Posterior cingulate gyrus (tissue), 11 donors: ENCODE measurements at regions of chr1 and their contacts with region 1.

Region 1: GRCh38 chr1:176559878-176560277 is 96.9 kb downstream of the PAPPA2 start:
- DNase-seq: peak in 4 of 10 donors; percentile 25 to 54 (median 26)

Region 2: DNA sequence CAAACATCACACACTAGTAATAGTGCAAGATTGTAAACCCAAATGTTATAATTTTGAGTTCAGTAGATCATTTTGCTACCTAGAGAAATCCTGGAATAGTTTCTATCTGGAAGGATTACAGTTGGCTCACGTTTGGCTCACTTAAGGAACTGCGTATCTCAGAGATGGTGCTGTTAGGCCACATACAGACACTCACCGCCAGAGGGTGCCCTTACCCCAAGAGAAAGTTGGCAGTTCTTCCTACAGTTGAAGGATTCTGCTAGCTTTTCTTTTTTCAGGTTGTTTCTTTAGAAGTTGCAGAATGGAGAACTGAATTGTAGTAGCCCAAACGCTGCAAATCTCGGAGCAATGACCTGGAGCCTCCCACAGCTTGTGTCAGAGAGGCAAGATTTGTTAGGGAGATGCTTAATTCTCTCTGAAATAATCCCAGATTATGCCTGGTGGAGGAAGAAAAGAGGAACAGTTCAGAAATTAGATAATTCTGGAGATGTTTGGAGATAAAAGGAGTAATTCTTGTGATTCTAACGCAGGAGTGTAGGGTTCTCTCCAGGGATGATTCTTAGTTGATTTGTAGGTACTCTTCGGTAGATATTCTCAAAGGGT is 184.8 kb before region 1 on chr1:
- intact Hi-C with region 1: loop called (anchors 1 kb)
- DNase-seq: peak; percentile 52 to 95 (median 81)

Region 3: DNA sequence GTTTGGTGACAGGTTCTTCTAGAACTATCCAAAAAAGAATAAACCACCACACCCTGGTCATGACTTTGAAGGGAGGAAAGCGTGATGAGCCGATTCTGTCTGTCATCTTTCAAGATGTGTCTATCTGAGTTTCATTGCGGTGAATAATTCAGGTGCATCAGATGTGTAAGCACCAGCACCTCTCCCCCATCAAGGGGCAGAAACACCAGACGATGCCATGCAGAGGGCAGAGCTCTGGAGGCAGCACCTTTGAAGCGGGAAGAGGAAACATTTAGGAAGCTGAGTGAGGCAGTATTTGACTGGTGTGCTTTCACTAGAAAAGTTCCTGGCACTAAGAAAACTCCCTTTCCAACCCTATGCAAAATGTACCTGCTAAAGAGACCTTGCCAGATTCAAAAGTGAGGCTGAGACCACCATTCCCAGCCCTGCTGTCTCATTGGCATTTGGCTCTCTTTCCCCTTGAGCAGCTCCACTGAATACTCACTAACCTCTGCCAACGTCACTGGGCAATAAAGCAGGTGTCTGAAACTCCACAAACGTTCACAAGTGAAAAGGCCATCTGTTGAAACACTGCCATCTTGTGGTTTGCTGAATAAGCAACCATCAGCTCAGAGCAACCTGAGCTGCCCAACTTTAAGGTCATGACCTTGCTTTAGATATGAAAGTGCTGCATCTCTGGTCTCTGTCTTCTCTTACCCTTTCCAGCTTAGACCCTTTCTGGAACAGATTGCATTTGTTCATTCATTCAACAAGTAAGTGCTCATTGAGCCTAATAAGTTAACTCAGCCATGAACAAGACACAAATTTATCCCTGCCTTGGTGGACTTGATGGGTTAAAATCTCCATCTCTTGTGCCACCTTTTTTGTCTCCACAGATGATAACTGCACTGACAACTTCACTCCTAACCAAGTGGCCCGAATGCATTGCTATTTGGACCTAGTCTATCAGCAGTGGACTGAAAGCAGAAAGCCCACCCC is 131.7 kb after region 1 on chr1:
- intact Hi-C with region 1: loop called (anchors 2 kb)
- DNase-seq: peak in 1 of 10 donors; percentile 14

Region 4: GRCh38 chr1:176785791-176786190 is 225.9 kb after region 1 on chr1:
- intact Hi-C with region 1: no loop called
- DNase-seq: no peak

Region 5: DNA sequence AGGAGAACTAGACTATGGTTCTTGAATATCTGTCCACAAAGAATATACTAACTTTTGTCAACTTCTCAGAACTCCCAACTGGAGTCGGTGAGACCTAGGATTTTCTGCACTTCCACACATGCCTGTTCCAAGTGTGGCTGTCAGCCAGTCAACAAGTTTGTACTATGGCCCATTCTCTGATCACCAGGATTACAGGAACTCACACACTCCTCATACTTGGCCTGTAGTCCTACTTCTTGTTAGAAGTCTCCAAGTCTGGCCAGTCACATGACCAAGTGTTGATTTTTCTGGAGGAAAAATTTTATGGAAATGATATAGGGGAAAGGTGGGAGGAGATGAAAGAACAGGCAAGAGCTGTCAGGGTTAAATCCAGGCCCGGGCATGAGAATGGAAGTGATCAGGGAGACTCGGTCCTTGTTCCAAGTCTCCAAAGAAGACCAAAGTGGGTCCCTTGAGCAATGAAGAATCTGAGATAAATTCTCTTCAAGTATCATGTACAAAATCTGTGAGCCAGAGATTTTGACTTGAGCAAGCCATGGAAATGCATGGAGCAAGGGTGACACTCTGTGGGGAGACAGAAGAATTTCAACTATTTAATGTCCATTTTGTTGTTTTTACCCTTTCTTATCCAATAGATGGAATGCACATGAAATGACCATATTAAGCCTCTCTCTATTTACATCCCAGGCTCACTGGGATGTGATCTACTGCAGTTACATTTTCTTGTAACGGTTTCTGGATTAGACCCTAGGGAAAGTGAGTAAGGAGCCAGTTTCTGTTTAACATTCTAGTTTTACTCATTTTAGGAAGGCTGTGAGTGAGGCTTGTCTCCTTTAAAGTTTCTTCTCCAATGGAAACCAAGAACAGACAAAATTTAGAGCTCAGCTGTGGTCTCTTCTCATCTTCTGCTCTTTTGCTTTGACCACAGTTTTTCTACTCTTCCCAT is 283.7 kb after region 1 on chr1:
- intact Hi-C with region 1: loop called (anchors 1 kb)
- DNase-seq: peak in 5 of 10 donors; percentile 21 to 79 (median 25)

Region 6: DNA sequence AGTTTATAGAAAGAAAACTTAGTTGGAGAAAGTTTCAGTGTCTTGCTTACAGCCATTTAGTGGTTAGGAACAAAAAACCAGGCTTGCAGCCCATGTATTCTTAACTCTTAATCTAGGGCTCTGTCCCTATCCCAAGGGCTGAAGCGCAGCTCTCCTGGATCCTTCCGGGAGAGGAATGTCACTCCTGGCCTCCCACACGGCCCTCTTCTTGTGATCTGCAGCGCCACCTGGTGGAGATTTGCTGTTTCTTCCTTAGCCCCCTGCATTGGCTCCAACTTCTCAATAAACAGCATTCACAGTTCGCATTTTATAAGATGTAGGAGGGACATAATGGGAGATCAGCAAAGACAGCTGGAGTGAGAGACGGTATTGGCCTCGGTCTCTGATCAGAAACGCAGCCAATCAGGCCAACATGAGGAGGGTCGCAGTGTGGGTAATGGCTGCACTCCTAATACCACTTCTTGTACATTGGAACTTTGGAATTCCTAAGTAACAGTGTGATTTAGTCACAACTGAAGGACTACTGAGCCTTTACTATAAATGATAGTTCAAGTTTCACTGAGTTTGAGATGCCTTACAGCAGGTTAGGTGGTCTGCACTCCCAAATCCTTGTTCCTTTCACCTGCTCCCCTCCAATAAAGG is 321.2 kb after region 1 on chr1:
- intact Hi-C with region 1: loop called (anchors 1 kb)
- DNase-seq: peak; percentile 44 to 94 (median 79)